ENCODE measurements at regions of chr14 and their contacts with region 1.

Region 1: GRCh38 chr14:95431199-95432143 is 85.0 kb downstream of the SYNE3 start:
- DNase-seq: peak; percentile 28 to 39
- ATAC-seq: peak; percentile 69 to 82; a peak in 4 of 6 replicates
- H3K4me3 ChIP-seq: no peak overlapping the region
- H3K27ac ChIP-seq: peak overlapping the region; percentile 38 to 71; a peak in 4 of 6 replicates
- H3K4me1 ChIP-seq: no peaks in the 10 kb centered on the region
- CTCF ChIP-seq: peak; percentile 55
- EP300 ChIP-seq: no peak
- POLR2A ChIP-seq: no peak
- RAD21 ChIP-seq: peak; percentile 54 to 63

Region 2: GRCh38 chr14:94681300-94682060 is 750.0 kb before region 1 on chr14:
- CTCF ChIA-PET with region 1: interaction called, 11 read pairs
- POLR2A ChIA-PET with region 1: no interaction called
- DNase-seq: peak; percentile 69 to 78
- ATAC-seq: peak; percentile 84 to 90
- H3K4me3 ChIP-seq: no peak overlapping the region
- H3K27ac ChIP-seq: peak overlapping the region in 1 of 2 experiments; percentile 42; a peak in 2 of 6 replicates
- H3K4me1 ChIP-seq: peaks cover 8% of the 10 kb centered on the region; the same call in 1 of the 3 replicates
- CTCF ChIP-seq: peak; percentile 81
- EP300 ChIP-seq: no peak
- POLR2A ChIP-seq: no peak
- RAD21 ChIP-seq: peak; percentile 86 to 91

Region 3: GRCh38 chr14:94689218-94689984 is 742.1 kb before region 1 on chr14:
- CTCF ChIA-PET with region 1: interaction called, 11 read pairs
- POLR2A ChIA-PET with region 1: no interaction called
- DNase-seq: peak; percentile 38 to 70
- ATAC-seq: peak; percentile 92 to 99
- H3K4me3 ChIP-seq: peak overlapping the region; percentile 28; the same call in 1 of the 3 replicates
- H3K27ac ChIP-seq: peak overlapping the region; percentile 62 to 72; a peak in 5 of 6 replicates
- H3K4me1 ChIP-seq: 0 out of 3 replicates have a peak, but pooled peaks cover 3% of the 10 kb centered on the region
- CTCF ChIP-seq: peak; percentile 96
- EP300 ChIP-seq: no peak
- POLR2A ChIP-seq: no peak
- RAD21 ChIP-seq: peak; percentile 85 to 96

Region 4: DNA sequence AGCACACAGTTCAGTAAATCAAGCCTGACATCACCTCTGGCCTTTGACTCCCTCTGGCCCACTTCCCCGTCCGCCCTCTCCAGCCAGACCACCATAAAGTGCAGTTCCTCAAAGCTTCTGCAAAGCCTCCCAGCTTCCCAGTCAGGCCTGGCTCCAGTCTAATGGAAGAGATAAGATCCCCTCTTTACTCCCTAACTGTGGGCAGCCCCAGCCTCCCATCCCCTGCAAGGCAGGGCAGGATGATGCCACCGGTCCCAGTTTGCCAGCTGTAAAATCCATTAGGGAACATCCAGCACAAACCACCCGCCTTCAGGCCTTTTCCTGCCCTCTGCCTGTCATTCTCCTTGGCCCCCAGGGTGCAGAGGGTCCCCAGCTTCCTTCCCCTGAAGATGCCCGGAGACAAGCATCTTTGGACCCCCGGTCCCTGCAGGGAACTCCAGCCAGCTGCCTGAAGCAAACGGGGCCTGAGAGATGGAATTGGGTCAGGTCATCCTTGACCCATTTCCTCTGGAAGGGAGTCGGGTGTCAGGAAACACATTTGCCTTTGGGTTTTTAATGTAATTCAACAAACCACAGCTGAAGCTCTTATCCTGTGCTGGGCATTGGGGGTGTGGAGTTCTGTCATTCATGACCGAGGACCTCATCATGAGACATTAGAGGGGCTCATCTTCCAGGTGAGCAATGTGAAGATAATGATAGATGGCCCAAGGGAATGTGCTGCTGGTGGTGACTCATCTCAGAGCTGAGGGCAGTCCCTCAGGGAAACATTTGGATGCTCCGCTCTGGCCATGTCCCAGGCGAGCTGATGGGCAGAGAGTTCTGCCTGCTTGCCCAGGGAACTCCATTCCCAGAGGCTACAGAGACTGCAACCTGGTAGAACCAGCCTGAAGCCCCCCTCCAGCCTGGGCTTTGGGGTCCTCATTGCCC is 17.9 kb before region 1 on chr14:
- CTCF ChIA-PET with region 1: interaction called, 26 read pairs
- POLR2A ChIA-PET with region 1: no interaction called
- DNase-seq: no peak
- ATAC-seq: peak in 1 of 2 experiments; percentile 25; a peak in 1 of 6 replicates
- H3K4me3 ChIP-seq: no peak overlapping the region
- H3K27ac ChIP-seq: no peak overlapping the region
- H3K4me1 ChIP-seq: no peaks in the 10 kb centered on the region
- CTCF ChIP-seq: no peak
- EP300 ChIP-seq: no peak
- POLR2A ChIP-seq: no peak
- RAD21 ChIP-seq: no peak

Region 5: DNA sequence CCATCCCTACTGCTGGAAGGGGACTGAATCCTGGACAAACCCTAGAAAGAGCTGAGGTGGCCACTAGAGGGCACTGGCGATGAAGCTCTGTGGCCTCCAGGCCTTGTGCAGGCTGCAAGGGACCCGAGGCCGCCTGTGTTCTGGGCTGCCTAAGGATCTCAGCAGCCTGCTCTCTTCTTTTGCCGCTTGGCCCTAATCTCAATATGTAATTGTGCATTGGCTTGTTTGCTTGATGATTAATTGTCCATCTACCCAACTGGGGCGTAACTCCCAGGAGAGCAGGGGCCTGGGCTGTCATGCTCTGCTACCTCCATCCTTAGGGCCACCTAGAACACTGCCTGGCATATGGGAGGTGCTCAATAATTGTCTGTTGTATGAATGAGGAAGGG is 11.2 kb after region 1 on chr14:
- CTCF ChIA-PET with region 1: interaction called, 53 read pairs
- POLR2A ChIA-PET with region 1: no interaction called
- DNase-seq: peak; percentile 69 to 91
- ATAC-seq: peak; percentile 90 to 98
- H3K4me3 ChIP-seq: no peak overlapping the region
- H3K27ac ChIP-seq: no peak overlapping the region
- H3K4me1 ChIP-seq: no peaks in the 10 kb centered on the region
- CTCF ChIP-seq: peak; percentile 83
- EP300 ChIP-seq: no peak
- POLR2A ChIP-seq: no peak
- RAD21 ChIP-seq: peak; percentile 82 to 90

Region 6: DNA sequence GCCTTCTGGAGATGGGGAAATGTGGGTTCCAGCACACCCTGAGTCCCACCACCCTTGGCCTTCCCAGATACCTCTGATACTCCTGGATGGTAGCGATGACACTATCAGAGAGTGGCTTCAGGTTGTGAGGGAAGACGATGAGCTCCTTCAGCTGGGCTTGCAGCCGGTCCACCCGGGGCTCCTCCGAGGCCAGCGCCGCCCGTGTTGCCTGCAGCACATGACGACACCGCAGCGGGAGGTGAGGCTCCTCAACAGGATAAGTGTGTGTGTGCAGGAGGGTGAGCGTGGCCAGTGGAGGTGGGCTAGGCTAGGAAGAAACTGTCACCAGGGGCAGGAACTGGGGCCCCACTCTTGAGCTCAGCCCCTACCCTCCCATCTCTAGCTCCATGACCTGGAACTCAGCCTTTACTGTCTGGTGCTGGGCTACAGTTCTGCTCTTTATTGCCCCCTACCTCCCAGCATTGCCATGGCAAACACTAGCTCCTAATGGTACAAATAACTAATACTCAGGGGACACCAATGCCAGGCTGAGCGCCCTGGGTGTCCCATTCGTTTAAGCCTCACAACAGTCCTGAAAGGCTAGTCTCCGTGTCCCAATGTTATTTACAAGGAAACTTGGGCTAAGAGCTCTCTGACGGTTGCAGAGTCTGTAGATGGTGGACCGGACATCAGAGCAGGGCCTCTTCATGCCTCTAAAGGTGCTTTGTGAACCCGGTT is 20.9 kb after region 1 on chr14:
- CTCF ChIA-PET with region 1: interaction called, 53 read pairs
- POLR2A ChIA-PET with region 1: no interaction called
- DNase-seq: peak; percentile 24 to 60
- ATAC-seq: peak; percentile 72 to 90
- H3K4me3 ChIP-seq: no peak overlapping the region
- H3K27ac ChIP-seq: no peak overlapping the region
- H3K4me1 ChIP-seq: no peaks in the 10 kb centered on the region
- CTCF ChIP-seq: peak; percentile 32; the same call in 1 of the 3 replicates
- EP300 ChIP-seq: no peak
- POLR2A ChIP-seq: no peak
- RAD21 ChIP-seq: peak in 1 of 2 experiments; percentile 27; a peak in 1 of 5 replicates

Region 7: GRCh38 chr14:95527387-95528002 is 96.0 kb after region 1 on chr14:
- CTCF ChIA-PET with region 1: interaction called, 14 read pairs
- POLR2A ChIA-PET with region 1: no interaction called
- DNase-seq: peak in 1 of 2 experiments; percentile 44
- ATAC-seq: peak; percentile 45 to 78; a peak in 3 of 6 replicates
- H3K4me3 ChIP-seq: no peak overlapping the region
- H3K27ac ChIP-seq: no peak overlapping the region
- H3K4me1 ChIP-seq: peaks cover 53% of the 10 kb centered on the region
- CTCF ChIP-seq: peak; percentile 77
- EP300 ChIP-seq: no peak
- POLR2A ChIP-seq: no peak
- RAD21 ChIP-seq: peak; percentile 55 to 60; a peak in 3 of 5 replicates

Region 8: DNA sequence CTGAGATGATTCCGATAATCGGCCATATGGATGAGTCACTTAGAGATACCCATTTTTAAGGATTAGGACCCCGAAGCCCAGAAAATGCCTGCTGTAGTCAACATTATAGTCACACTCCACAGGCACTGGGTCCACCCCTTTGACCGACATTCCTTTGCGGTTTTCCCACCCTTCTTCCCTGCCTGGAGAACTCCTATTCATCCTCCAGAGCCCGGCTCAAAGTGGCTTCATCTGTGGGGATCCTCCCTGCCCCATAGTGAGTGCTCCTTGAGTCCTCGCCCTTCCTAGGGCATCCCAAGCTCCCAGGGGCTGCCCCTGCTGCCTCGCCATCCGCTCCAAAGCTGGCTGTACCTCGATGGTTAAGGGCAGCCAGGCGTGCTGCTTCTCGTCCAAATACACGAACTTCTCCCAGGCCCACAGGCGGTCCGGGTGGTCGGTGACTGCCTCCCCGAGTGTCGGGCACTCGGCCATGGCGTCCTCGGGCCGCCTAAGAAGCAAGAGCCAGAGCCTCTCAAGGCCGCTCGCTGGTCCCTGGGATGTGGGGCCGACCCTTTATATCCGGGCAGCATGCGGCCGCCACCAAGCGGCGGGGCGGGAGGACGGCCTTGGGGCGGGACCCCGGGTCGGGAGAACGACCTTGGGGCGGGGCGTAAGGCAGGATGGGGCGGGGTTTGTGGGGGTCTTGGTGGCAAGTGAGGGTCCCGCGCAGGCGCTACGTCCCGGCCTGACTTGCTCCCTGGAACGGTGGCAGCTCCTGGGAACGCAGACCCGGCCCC is 282.3 kb after region 1 on chr14 and contains the start of gene TCL1A:
- CTCF ChIA-PET with region 1: no interaction called
- POLR2A ChIA-PET with region 1: no interaction called
- DNase-seq: no peak
- ATAC-seq: no peak
- H3K4me3 ChIP-seq: no peak within 1 kb of the TSS
- H3K27ac ChIP-seq: no peak within 1 kb of the TSS
- H3K4me1 ChIP-seq: no peaks in the 10 kb centered on the region
- CTCF ChIP-seq: no peak
- EP300 ChIP-seq: no peak
- POLR2A ChIP-seq: no peak
- RAD21 ChIP-seq: no peak
- polyA plus RNA-seq, gene TCL1A: not detected in 2 replicates

Region 9: DNA sequence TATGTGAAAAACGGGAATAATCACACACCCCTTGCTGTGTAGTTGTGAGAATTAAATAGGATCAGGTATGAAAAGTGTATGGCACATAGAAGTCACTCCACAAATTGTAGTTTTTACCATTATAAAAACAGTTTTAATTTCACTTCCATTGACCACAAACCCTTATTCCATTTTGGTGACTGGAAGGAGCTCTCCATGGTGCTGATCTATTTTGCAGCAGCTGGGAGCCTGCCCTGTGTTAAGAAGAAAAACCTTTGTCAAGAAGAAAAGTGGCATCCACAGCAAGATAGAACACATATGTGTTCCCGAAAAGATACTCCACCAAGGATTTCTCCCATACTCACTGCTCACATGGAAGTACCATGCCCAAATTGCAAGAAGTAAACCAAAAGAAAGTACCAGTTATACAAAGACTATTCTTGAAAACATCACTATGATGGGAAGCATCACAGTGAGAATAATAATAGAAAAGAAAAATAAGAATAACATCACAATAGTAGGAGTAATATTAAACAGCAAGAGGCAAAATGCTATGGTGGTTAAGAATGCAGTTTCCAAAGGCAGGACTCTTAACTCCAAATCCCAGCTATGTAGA is 503.9 kb after region 1 on chr14:
- CTCF ChIA-PET with region 1: no interaction called
- POLR2A ChIA-PET with region 1: no interaction called
- DNase-seq: no peak
- ATAC-seq: no peak
- H3K4me3 ChIP-seq: no peak overlapping the region
- H3K27ac ChIP-seq: no peak overlapping the region
- H3K4me1 ChIP-seq: no peaks in the 10 kb centered on the region
- CTCF ChIP-seq: no peak
- EP300 ChIP-seq: no peak
- POLR2A ChIP-seq: no peak
- RAD21 ChIP-seq: no peak